HepG2 (cell line): ENCODE measurements at regions of chr16 and their contacts with region 1.

Region 1: GRCh38 chr16:3134564-3135417 is at the start of gene ZNF213:
- DNase-seq: peak; percentile 98
- ATAC-seq: peak; percentile 94
- H3K4me3 ChIP-seq: peak within 1 kb of the TSS; percentile 90 to 100 (median 97)
- H3K27ac ChIP-seq: peak within 1 kb of the TSS; percentile 93
- H3K4me1 ChIP-seq: peaks cover 25% of the 10 kb centered on the region
- H3K27me3 ChIP-seq: no peaks in the 10 kb centered on the region; a peak in 1 of 5 replicates
- CTCF ChIP-seq: no peak
- EP300 ChIP-seq: 0 out of 4 replicates have a peak, but pooled peaks of 1 of the 2 experiments have one; percentile 20
- POLR2A ChIP-seq: peak; percentile 79 to 84
- RAD21 ChIP-seq: no peak
- total RNA-seq, gene ZNF213: 0.97 and 1.2 TPM in 2 replicates

Region 2: GRCh38 chr16:3099732-3100499 is 34.9 kb before region 1 on chr16:
- CTCF ChIA-PET with region 1: interaction called, 5 read pairs
- POLR2A ChIA-PET with region 1: interaction called, 6 read pairs
- in situ Hi-C with region 1: no loop called
- intact Hi-C with region 1: loop called (anchors 5 kb)
- DNase-seq: peak; percentile 81
- ATAC-seq: peak; percentile 75
- H3K4me3 ChIP-seq: peak overlapping the region in 2 of 3 experiments; percentile 5 to 62; a peak in 2 of 6 replicates
- H3K27ac ChIP-seq: no peak overlapping the region
- H3K4me1 ChIP-seq: peaks cover 59% of the 10 kb centered on the region
- H3K27me3 ChIP-seq: peaks cover 0 to 13% of the 10 kb centered on the region in 2 experiments; a peak in 2 of 5 replicates
- CTCF ChIP-seq: no peak
- EP300 ChIP-seq: no peak
- POLR2A ChIP-seq: peak in 1 of 2 experiments; percentile 58; a peak in 1 of 4 replicates
- RAD21 ChIP-seq: no peak

Region 3: GRCh38 chr16:3123986-3124886 is 10.6 kb before region 1 on chr16:
- CTCF ChIA-PET with region 1: no interaction called
- POLR2A ChIA-PET with region 1: interaction called, 12 read pairs
- in situ Hi-C with region 1: no loop called
- intact Hi-C with region 1: no loop called
- DNase-seq: peak; percentile 91
- ATAC-seq: peak; percentile 91
- H3K4me3 ChIP-seq: peak overlapping the region; percentile 57 to 81 (median 63); a peak in 5 of 6 replicates
- H3K27ac ChIP-seq: peak overlapping the region; percentile 48
- H3K4me1 ChIP-seq: peaks cover 31% of the 10 kb centered on the region
- H3K27me3 ChIP-seq: no peaks in the 10 kb centered on the region; a peak in 1 of 5 replicates
- CTCF ChIP-seq: peak; percentile 63
- EP300 ChIP-seq: no peak
- POLR2A ChIP-seq: peak in 1 of 2 experiments; percentile 10; a peak in 1 of 4 replicates
- RAD21 ChIP-seq: peak; percentile 51

Region 4: GRCh38 chr16:3158471-3159314 is 23.9 kb after region 1 on chr16:
- CTCF ChIA-PET with region 1: interaction called, 3 read pairs
- POLR2A ChIA-PET with region 1: interaction called, 29 read pairs
- in situ Hi-C with region 1: no loop called
- intact Hi-C with region 1: no loop called
- DNase-seq: peak; percentile 87
- ATAC-seq: peak; percentile 68
- H3K4me3 ChIP-seq: peak overlapping the region; percentile 68 to 87 (median 81)
- H3K27ac ChIP-seq: peak overlapping the region; percentile 91
- H3K4me1 ChIP-seq: peaks cover 46% of the 10 kb centered on the region
- H3K27me3 ChIP-seq: no peaks in the 10 kb centered on the region; a peak in 1 of 5 replicates
- CTCF ChIP-seq: 0 out of 2 replicates have a peak, but pooled peaks have one; percentile 15
- EP300 ChIP-seq: no peak
- POLR2A ChIP-seq: peak; percentile 43 to 62; a peak in 3 of 4 replicates
- RAD21 ChIP-seq: no peak

Region 5: DNA sequence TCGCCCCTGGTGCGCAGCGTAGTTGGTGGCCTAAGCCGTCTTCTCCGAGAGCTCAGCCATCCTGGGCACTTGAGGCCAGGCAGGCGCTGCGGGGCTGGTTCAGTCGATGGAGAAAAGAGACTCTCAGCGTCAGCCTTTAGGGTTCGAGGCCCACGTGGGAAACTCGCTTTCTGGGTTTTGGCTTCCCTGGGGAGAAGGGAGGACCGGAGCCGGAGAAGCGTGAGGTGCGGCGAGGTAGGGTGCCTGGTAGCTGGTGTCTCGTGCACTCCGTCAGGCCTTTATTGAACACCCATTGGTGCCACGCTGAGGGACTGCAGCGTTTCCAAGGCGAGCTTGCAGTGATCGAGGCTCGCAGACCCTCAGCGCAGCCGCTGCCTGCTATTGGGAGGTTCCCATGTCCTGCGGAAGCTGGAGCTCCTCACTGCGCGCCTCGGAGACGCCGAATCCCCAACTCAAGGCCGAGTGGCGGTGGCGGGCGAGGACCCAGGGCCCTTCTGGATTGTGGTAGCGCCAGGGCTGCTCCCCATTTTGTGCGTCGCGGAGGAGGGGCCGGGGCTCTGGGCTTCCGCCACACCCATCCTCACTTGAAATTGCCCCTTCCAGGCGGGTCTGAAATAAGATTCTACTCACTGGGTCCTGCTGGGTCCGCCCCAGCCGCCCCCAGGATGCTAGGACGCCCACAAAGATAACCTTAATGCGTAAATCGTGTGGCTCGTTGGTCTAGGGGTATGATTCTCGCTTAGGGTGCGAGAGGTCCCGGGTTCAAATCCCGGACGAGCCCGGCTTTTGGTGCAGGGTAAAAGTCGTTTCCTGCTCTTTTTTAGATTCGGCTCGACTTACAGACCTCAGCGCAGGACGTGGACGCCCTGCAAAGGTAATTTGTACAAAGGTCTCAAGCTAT is 54.4 kb after region 1 on chr16:
- CTCF ChIA-PET with region 1: no interaction called
- POLR2A ChIA-PET with region 1: interaction called, 11 read pairs
- in situ Hi-C with region 1: no loop called
- intact Hi-C with region 1: no loop called
- DNase-seq: peak; percentile 60
- ATAC-seq: peak; percentile 26
- H3K4me3 ChIP-seq: peak overlapping the region; percentile 72 to 91 (median 76)
- H3K27ac ChIP-seq: peak overlapping the region; percentile 40
- H3K4me1 ChIP-seq: peaks cover 43% of the 10 kb centered on the region
- H3K27me3 ChIP-seq: no peaks in the 10 kb centered on the region
- CTCF ChIP-seq: no peak
- EP300 ChIP-seq: peak in 1 of 2 experiments; percentile 14; a peak in 1 of 4 replicates
- POLR2A ChIP-seq: no peak
- RAD21 ChIP-seq: no peak